RWPE1 (cell line): ENCODE measurements at regions of chr19 and their contacts with region 1.

Region 1: GRCh38 chr19:1837625-1838105 is 10.6 kb downstream of the REXO1 start:
- DNase-seq: peak; percentile 53
- H3K27ac ChIP-seq: peak overlapping the region; percentile 98
- CTCF ChIP-seq: peak; percentile 87

Region 2: DNA sequence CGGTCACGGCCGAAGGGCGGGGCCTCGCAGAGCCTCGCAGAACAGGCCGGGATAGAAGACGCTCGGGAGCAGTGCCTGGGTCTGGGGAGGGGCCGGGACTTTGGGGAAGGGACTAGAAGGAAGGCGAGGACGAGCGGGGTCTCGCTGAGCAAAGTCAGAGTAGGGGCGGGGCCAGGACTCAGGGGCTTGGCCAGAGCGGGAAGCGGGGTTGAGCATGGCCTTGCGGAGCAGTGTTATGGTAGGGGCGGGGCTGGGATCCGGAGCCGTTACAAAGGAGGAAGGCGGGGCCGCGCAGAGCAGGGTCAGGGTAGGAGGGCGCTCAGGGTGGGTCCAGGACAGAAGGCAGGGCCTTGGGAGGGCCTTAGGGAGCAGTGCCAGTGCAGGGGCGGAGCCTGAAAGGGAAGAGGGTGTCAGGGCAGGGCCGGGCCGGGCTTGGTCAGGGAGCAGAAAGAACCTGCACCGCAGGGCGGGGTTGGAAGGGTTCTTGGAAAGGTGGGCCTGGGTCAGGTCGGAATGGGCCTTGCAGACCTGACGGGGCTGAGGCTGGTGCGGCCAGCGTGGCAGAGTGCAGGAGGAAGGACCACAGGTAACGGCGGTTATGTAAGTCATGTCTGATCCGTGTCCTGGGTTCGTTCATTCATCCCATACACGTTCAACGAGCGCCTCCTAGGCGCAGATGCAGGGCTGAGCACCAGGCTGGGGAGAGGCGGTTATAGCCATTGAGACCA is 25.0 kb before region 1 on chr19:
- CTCF ChIA-PET with region 1: no interaction called
- POLR2A ChIA-PET with region 1: no interaction called
- DNase-seq: peak; percentile 96
- H3K27ac ChIP-seq: peak overlapping the region; percentile 93
- CTCF ChIP-seq: peak; percentile 54

Region 3: GRCh38 chr19:1825909-1826556 is 11.6 kb before region 1 on chr19:
- CTCF ChIA-PET with region 1: interaction called, 12 read pairs
- POLR2A ChIA-PET with region 1: no interaction called
- DNase-seq: peak; percentile 76
- H3K27ac ChIP-seq: peak overlapping the region; percentile 42
- CTCF ChIP-seq: peak; percentile 93

Region 4: DNA sequence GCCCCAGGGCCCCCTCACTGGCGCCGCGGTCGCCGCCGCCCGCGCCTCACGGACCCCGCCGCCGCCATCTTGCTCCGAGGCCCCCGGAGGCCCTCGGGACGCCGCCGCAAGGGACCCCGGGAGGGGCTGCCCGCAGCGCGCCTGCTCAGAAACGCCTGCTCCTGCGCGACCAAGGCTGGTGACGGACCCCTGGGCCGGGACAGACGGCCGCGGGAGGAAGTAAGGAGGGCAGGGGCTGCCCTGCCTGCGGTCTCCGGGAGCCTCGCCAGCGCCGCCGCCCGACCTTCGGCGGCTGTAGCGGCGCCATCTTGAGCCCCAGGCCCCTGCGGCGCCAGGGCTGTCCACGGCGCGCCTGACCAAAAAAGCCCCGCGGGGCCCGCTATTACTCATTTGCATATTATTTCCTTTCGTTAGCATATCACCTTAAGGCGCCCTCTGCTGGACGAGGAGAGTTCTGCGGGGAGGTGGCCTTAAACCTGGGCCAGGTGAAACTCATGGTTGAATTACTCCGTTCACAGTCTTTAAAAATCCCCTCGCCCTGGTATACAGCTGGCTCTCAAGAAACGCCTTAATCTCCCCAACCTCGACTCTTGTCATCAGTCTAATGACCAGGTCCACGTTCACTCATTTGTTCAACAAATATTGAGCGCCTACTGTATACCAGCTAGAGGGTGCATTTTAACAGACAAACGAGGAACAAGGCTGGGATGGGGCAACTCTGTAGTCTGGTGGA is 10.9 kb after region 1 on chr19 and contains the start of gene REXO1:
- CTCF ChIA-PET with region 1: interaction called, 5 read pairs
- POLR2A ChIA-PET with region 1: interaction called, 12 read pairs
- DNase-seq: peak; percentile 83
- H3K27ac ChIP-seq: peak within 1 kb of the TSS; percentile 98
- CTCF ChIP-seq: peak; percentile 91

Region 5: DNA sequence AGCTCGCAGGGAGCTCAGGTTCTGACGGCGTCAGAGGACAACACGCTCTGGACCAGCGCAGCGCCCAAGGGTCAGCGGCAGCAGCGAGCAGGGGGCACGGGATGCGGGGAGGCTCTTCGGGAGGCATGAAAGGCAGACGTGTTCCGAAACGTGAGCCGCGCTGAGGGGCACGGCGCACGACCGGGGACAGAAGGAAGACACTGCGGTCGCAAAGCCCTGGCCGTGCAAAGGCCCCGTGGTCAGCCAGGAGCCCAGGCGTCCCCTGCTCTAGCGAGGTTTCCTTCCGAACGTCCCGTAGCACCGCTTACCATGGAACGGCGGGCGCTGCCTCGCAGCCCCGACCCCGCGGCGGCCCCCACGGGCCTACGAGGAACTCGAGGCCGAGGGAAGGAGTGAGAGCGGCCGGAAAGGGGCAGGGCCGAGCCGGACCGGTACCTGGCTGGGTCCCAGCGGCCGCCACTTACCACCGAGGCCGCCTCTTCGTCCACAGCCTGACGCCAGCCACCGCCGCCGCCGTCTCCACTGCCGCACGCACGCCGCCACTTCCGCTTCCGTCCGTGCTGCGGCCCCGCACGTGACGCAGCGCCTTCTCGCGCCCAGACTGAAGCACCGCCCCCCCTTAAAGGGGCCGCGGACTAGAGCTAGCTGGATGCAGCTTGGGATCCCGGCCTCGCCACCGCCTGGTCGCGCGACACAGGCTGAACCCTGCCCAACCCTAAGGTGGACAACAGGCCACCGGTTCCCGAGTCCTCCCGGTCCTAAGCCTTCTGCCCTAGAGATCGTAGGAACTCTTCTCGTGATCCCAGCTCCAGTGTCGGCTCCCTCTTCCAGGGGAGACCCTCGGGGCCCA is 38.2 kb after region 1 on chr19:
- CTCF ChIA-PET with region 1: no interaction called
- POLR2A ChIA-PET with region 1: no interaction called
- DNase-seq: peak; percentile 67
- H3K27ac ChIP-seq: peak overlapping the region; percentile 90
- CTCF ChIP-seq: no peak